ENCODE measurements at regions of chr9 and their contacts with region 1.

Region 1: GRCh38 chr9:113657703-113658544 is 194.4 kb downstream of the RGS3 start:
- DNase-seq: peak; percentile 88
- ATAC-seq: peak; percentile 98
- H3K4me3 Mint-ChIP-seq: no peak overlapping the region
- H3K27ac Mint-ChIP-seq: no peak overlapping the region
- H3K4me1 Mint-ChIP-seq: peaks cover 6% of the 10 kb centered on the region
- H3K27me3 Mint-ChIP-seq: peaks cover 7% of the 10 kb centered on the region
- CTCF ChIP-seq: peak; percentile 95

Region 2: DNA sequence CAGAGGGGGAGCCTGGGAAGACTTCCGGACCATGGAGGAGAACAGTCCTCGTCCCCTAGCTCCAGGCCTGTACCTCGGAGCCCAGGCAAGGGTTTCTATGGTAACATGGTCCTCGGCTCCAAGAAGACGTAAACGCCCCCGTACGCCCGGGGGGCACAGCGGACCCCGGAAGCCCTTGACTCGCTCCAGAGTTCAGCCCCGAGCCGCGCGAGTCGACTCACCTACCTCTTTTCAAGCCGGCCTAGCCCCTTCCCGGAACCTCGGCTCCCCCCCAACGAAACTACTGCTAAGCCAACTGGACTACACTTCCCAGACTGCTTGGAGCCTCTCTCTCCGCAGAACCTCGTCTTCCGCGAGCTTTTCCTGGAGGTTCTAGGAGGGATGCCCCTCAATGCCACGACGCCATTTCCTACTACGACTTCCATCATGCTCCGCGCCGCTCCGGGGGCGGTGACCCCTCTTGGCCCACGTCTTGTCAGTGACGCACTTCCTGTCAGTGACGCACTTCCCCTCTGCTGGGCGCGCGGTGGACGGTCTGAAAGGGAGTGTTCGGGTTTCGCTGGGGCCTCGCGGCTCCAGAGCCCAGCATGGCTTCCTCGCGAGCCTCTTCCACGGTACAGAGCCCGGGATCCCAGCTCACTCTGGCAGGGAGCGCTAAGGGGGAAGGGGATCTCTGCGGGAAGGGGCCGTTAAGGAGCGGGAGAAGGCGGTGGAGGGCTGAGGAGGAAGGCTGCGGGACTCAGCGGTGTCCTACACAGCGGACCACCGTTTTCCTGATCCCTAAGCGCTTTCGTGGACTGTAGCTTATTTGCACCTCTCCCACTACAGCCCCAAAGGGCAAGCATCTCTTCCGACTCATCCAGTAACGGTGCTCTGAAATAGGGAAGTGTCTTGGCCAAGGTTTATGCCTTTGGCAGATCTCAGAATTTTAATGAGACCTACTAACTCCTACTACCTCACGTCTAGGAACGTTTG is 382.5 kb before region 1 on chr9 and contains the starts of genes CDC26 and PRPF4:
- CTCF ChIA-PET with region 1: interaction called, 53 read pairs
- POLR2A ChIA-PET with region 1: interaction called, 5 read pairs
- intact Hi-C with region 1: loop called (anchors 2 kb)
- DNase-seq: peak; percentile 99
- ATAC-seq: peak; percentile 91
- H3K4me3 Mint-ChIP-seq: no peak within 1 kb of the TSS
- H3K27ac Mint-ChIP-seq: no peak within 1 kb of the TSS
- H3K4me1 Mint-ChIP-seq: peaks cover 32% of the 10 kb centered on the region
- H3K27me3 Mint-ChIP-seq: no peaks in the 10 kb centered on the region
- CTCF ChIP-seq: no peak
- total RNA-seq, gene CDC26: 28.0 to 30.4 TPM
- total RNA-seq, gene PRPF4: 52.9 to 56.5 TPM

Region 3: GRCh38 chr9:113410207-113410864 is 247.6 kb before region 1 on chr9 and contains the starts of genes C9orf43 and POLE3:
- CTCF ChIA-PET with region 1: interaction called, 91 read pairs
- POLR2A ChIA-PET with region 1: no interaction called
- intact Hi-C with region 1: no loop called
- DNase-seq: peak; percentile 98
- ATAC-seq: peak; percentile 92
- H3K4me3 Mint-ChIP-seq: peak within 1 kb of the TSS; percentile 86
- H3K27ac Mint-ChIP-seq: peak within 1 kb of the TSS; percentile 99
- H3K4me1 Mint-ChIP-seq: peaks cover 32% of the 10 kb centered on the region
- H3K27me3 Mint-ChIP-seq: no peaks in the 10 kb centered on the region
- CTCF ChIP-seq: no peak
- total RNA-seq, gene C9orf43: 0.74 to 0.83 TPM
- total RNA-seq, gene POLE3: 49.0 to 50.9 TPM

Region 4: DNA sequence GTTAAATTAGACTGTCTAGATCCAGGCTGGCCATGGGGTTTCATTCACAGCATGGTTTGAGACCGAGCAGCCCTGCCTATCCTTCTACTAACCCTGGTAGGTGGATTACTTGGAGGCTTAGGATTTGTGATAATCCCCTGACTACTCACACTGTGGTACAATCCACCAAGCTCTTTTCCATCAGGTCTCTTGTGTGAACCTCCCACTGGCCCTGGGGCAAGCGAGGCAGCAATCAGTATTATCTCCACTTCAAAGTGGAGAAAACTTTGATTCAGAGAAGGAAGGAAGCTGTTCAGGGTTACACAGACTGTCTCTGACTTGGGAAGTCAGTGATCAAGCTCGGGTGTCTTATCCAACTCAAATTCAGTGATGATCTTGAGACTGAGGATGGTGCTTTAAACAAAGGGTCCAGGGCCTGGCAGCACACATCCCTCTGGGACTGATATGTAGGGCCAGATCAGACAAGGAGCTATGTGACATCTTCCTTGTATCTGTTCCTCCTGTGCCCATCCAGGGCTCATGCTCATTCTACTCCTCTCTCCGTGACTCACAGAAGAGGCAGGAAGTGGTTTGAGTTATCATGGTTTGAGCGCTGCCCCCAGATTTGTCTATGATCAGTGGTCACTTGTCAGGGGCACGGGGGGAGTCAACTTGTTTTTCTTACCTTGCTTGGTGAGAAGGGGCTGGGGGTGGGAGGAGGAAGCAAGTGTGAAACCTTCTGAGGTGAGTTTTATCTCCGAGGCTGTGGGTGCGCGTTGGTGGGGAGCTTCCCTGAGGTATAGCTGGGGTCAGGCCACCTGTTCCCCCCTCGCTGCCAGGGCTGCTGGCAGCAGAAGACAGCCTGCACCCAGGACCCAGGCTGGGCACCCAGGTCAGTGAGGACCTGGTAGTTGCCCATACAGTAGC is 145.8 kb before region 1 on chr9:
- CTCF ChIA-PET with region 1: interaction called, 13 read pairs
- POLR2A ChIA-PET with region 1: interaction called, 3 read pairs
- intact Hi-C with region 1: no loop called
- DNase-seq: peak; percentile 97
- ATAC-seq: peak; percentile 74
- H3K4me3 Mint-ChIP-seq: peak overlapping the region; percentile 55
- H3K27ac Mint-ChIP-seq: peak overlapping the region; percentile 97
- H3K4me1 Mint-ChIP-seq: peaks cover 66% of the 10 kb centered on the region
- H3K27me3 Mint-ChIP-seq: no peaks in the 10 kb centered on the region
- CTCF ChIP-seq: no peak

Region 5: GRCh38 chr9:113614843-113615648 is 42.9 kb before region 1 on chr9:
- CTCF ChIA-PET with region 1: interaction called, 14 read pairs
- POLR2A ChIA-PET with region 1: no interaction called
- intact Hi-C with region 1: no loop called
- DNase-seq: peak; percentile 63
- ATAC-seq: peak; percentile 78
- H3K4me3 Mint-ChIP-seq: peak overlapping the region; percentile 0
- H3K27ac Mint-ChIP-seq: peak overlapping the region; percentile 74
- H3K4me1 Mint-ChIP-seq: peaks cover 46% of the 10 kb centered on the region
- H3K27me3 Mint-ChIP-seq: peaks cover 6% of the 10 kb centered on the region
- CTCF ChIP-seq: no peak

Region 6: GRCh38 chr9:113640418-113640817 is 17.5 kb before region 1 on chr9:
- CTCF ChIA-PET with region 1: interaction called, 21 read pairs
- POLR2A ChIA-PET with region 1: no interaction called
- intact Hi-C with region 1: no loop called
- DNase-seq: no peak
- ATAC-seq: no peak
- H3K4me3 Mint-ChIP-seq: no peak overlapping the region
- H3K27ac Mint-ChIP-seq: no peak overlapping the region
- H3K4me1 Mint-ChIP-seq: no peaks in the 10 kb centered on the region
- H3K27me3 Mint-ChIP-seq: peaks cover 5% of the 10 kb centered on the region
- CTCF ChIP-seq: no peak

Measured in activated CD8-positive, alpha-beta T cell treated with anti-CD3 and anti-CD28 coated beads for 36 hours (primary cell).